ENCODE measurements at regions of chr5 and their contacts with region 1.

Region 1: DNA sequence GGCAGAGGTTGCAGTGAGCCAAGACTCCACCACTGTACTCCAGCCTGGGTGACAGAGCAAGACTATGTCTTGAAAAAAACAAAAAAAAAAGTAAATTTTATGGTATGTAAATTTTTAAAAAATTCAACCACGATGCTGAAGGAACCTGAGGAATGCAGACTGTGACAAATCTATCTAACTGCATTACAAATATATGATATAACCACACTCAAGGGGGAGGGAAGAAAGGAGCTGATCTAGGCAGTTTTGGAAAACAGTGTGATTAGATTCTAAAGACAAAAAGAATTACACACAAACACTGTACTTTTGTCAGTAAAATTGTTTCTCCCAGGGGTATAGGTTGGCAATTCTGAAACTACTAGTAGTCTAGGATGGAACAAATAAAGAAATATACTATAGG is 17.0 kb downstream of the LARS1 start:
- DNase-seq: no peak
- ATAC-seq: no peak
- H3K4me3 ChIP-seq: no peak overlapping the region
- H3K27ac ChIP-seq: no peak overlapping the region
- H3K4me1 ChIP-seq: no peaks in the 10 kb centered on the region
- H3K27me3 ChIP-seq: no peaks in the 10 kb centered on the region

Region 2: GRCh38 chr5:145946112-145946861 is 219.2 kb before region 1 on chr5:
- intact Hi-C with region 1: no loop called
- DNase-seq: no peak
- ATAC-seq: no peak
- H3K4me3 ChIP-seq: no peak overlapping the region
- H3K27ac ChIP-seq: no peak overlapping the region
- H3K4me1 ChIP-seq: peaks cover 0 to 3% of the 10 kb centered on the region in 2 donors
- H3K27me3 ChIP-seq: no peaks in the 10 kb centered on the region

Region 3: GRCh38 chr5:146188358-146188757 is 22.9 kb after region 1 on chr5:
- intact Hi-C with region 1: no loop called
- DNase-seq: no peak
- ATAC-seq: no peak
- H3K4me3 ChIP-seq: no peak overlapping the region
- H3K27ac ChIP-seq: no peak overlapping the region
- H3K4me1 ChIP-seq: no peaks in the 10 kb centered on the region
- H3K27me3 ChIP-seq: no peaks in the 10 kb centered on the region

Region 4: DNA sequence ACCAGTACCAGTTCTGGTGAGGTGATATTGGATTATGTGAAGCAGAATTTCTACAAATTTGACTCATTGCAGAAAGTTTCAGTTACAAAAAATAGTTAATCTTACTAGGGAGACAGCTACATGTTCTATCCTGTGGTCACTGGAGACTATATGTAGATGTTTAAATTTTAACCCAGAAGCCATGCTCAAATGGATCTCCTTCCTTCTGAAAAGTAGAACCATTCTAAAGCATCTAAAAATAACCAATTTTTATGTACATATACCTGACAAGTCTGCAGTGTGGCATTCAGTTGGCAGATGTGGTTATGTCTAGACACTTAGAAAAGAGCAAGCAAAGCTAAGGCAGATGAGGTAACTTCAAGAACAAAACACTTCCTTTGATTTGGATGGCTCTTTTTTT is 107.6 kb after region 1 on chr5:
- intact Hi-C with region 1: loop called in 1 of 2 experiments (anchors 5 kb)
- DNase-seq: no peak
- ATAC-seq: no peak
- H3K4me3 ChIP-seq: no peak overlapping the region
- H3K27ac ChIP-seq: no peak overlapping the region
- H3K4me1 ChIP-seq: no peaks in the 10 kb centered on the region
- H3K27me3 ChIP-seq: no peaks in the 10 kb centered on the region

Region 5: GRCh38 chr5:146331423-146331822 is 166.0 kb after region 1 on chr5:
- intact Hi-C with region 1: no loop called
- DNase-seq: no peak
- ATAC-seq: no peak
- H3K4me3 ChIP-seq: no peak overlapping the region
- H3K27ac ChIP-seq: no peak overlapping the region
- H3K4me1 ChIP-seq: no peaks in the 10 kb centered on the region
- H3K27me3 ChIP-seq: peaks cover 0 to 2% of the 10 kb centered on the region in 2 donors